ENCODE measurements at regions of chr3 and their contacts with region 1.

Region 1: DNA sequence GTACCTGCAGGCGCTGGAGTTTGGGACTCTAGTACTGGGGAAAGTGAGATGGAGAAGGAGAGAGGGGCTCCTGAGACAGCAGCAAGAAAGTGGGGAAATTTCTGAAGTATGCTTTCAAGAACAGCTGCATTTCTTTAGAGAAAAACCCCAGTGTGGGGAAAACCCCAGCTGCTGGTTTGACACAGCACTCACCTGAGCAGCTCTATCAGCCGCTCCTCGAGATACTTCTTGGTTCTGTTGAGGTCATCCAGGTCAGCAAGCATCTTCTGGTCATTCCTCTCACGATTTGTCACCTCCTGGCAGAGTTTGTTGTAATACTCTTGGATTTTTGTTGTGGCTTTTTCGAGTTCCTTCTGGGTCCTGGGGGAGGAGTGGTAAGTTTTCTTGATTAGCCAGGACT is 18.8 kb downstream of the CXCR6 start:
- DNase-seq: no peak
- H3K4me3 Mint-ChIP-seq: no peak overlapping the region
- H3K27ac Mint-ChIP-seq: no peak overlapping the region
- H3K4me1 Mint-ChIP-seq: peaks cover 55% of the 10 kb centered on the region
- H3K27me3 Mint-ChIP-seq: no peaks in the 10 kb centered on the region

Region 2: GRCh38 chr3:45950686-45951600 is 11.1 kb before region 1 on chr3:
- CTCF ChIA-PET with region 1: interaction called, 19 read pairs
- POLR2A ChIA-PET with region 1: interaction called, 3 read pairs
- DNase-seq: peak; percentile 76
- H3K4me3 Mint-ChIP-seq: peak overlapping the region; percentile 1
- H3K27ac Mint-ChIP-seq: peak overlapping the region; percentile 87
- H3K4me1 Mint-ChIP-seq: peaks cover 61% of the 10 kb centered on the region
- H3K27me3 Mint-ChIP-seq: no peaks in the 10 kb centered on the region

Region 3: DNA sequence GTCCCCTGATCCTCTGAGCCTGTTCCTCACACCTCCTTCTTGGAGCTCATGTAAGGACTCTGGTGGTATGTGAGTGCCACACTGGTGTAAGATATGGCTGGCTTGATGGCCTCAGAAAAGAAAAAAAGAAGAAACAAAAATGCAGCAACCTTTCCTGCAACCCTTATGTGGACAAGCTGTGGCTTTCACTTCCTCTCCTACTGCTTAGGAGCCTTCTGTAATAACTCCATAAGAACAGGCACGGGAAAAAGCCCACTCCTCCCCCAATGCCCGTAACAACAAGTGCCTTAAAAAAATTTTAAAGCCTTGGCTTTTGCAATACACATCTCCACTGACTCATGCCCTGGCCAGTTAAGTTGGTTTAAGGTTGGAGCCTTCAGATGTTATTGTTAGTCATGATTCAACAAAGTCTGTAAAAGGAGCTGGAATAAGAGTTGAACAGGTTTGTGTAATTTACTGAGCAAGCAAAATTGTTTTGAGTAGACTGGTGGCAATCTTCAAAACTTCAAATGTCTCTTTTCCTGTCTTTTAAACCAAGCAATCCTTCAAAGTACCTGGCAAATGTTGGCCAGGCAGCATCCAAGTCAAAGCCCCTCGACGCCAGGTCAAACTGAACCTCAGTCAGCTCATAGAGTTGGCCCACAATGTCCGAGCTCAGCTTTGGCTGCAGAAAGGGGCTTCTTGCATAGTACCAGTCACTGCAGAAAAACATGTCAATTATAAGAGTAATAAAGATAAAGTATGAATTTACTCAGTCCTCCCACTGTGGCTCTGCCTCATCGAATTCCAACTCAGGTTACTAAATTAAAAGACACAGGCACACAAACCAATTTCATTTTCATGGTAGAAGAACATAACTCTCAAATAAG is 10.7 kb after region 1 on chr3:
- CTCF ChIA-PET with region 1: interaction called, 23 read pairs
- POLR2A ChIA-PET with region 1: interaction called, 3 read pairs
- DNase-seq: no peak
- H3K4me3 Mint-ChIP-seq: no peak overlapping the region
- H3K27ac Mint-ChIP-seq: peak overlapping the region; percentile 78
- H3K4me1 Mint-ChIP-seq: peaks cover 66% of the 10 kb centered on the region
- H3K27me3 Mint-ChIP-seq: no peaks in the 10 kb centered on the region

Region 4: GRCh38 chr3:45978006-45978761 is 16.2 kb after region 1 on chr3:
- CTCF ChIA-PET with region 1: interaction called, 23 read pairs
- POLR2A ChIA-PET with region 1: interaction called, 3 read pairs
- DNase-seq: peak; percentile 79
- H3K4me3 Mint-ChIP-seq: peak overlapping the region; percentile 58
- H3K27ac Mint-ChIP-seq: peak overlapping the region; percentile 95
- H3K4me1 Mint-ChIP-seq: peaks cover 81% of the 10 kb centered on the region
- H3K27me3 Mint-ChIP-seq: no peaks in the 10 kb centered on the region

Measured in activated CD4-positive, alpha-beta T cell treated with anti-CD3 and anti-CD28 coated beads, Interleukin-2, amount 10 ng/mL, durations not matched to agents 7 days and 5 days (primary cell).